ENCODE measurements at regions of chr18 and their contacts with region 1.

Region 1: DNA sequence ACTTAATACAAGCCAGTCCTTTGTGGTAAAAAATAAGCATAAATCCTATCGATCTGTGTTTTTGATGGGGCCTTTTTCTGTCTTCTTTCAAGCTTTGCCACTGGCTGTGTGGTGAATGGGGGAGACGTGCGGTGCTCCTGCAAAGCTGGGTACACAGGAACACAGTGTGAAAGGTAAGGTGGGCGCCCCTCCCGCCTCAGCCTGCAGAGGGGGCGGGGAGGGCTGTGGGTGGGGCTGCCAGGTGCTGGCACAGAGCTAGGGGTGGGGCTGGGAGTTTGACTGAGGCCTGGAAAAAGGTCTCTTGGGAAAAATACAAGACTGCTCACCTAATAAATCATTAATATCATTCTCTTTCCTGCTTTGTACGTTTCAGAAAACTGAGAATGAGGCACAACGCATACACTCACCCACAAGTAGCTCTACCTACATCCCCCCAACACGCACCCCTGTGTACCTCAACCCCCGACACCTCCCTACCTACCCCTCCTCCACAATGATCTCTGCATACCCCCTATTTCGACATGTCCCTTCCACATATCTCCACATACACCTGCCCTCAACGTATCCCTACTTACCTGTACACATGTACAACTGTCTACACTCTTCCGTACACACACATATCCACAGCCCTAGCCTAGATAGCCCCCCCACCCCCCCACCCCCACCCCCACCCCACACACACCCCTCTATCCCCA is 129.7 kb upstream of the TTC39C start:
- DNase-seq: no peak
- ATAC-seq: peak; percentile 74

Region 2: DNA sequence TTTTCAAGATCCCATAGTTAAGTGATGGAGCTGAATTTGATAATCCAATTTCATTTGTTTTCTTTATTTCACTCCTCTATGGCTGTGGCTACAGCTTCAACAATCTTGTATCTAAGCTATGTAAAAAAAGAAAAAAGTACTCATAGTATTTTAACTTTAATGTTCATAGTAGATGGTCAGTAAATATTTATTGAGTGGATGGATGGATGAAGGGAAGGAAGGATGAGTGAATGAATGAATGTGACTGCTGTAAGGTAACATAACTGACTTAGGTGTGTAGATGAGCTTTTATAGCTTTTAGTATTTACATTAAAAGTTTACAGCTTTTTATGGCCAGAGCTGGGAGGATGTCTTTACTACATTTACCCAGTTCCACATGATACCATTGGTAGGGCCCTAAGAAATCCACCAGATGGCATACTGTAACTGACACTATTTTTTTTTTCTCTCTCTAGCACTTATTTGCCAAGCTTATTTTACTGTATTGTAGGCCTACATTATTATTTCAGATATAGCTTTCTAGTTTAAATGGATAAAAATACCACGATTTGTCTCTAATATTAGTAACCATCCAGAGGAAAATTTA is 562.2 kb after region 1 on chr18:
- intact Hi-C with region 1: loop called (anchors 5 kb)
- DNase-seq: no peak
- ATAC-seq: no peak

Region 3: DNA sequence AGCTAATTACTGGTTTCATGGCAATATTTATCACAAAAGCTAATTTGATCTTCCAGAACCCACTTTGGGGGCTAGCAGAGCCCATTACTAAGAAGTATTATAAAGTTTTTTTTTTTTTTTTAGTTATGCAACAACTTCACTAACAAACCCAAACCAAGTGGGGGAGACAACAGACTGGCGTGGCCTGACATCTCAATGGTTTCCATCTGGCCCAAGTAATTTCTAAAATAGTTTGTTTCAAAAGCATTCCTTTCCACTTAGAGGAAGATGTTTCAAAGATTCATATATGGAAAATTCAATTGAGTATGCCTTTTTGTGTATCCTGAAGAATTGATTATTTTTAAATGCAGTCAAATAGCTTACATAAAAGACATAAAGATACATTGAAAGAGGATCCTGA is 942.7 kb after region 1 on chr18:
- intact Hi-C with region 1: no loop called
- DNase-seq: no peak
- ATAC-seq: no peak

Measured in sciatic nerve (tissue), 2 donors.